PC-3 (cell line): ENCODE measurements at regions of chr16 and their contacts with region 1.

Region 1: GRCh38 chr16:11396241-11397048 is 51.2 kb downstream of the RMI2 start:
- DNase-seq: peak; percentile 76
- ATAC-seq: peak; percentile 82
- H3K4me3 ChIP-seq: no peak overlapping the region
- H3K27ac ChIP-seq: no peak overlapping the region
- H3K4me1 ChIP-seq: no peaks in the 10 kb centered on the region; the same call in 1 of the 2 replicates
- H3K27me3 ChIP-seq: no peaks in the 10 kb centered on the region
- CTCF ChIP-seq: peak; percentile 85

Region 2: DNA sequence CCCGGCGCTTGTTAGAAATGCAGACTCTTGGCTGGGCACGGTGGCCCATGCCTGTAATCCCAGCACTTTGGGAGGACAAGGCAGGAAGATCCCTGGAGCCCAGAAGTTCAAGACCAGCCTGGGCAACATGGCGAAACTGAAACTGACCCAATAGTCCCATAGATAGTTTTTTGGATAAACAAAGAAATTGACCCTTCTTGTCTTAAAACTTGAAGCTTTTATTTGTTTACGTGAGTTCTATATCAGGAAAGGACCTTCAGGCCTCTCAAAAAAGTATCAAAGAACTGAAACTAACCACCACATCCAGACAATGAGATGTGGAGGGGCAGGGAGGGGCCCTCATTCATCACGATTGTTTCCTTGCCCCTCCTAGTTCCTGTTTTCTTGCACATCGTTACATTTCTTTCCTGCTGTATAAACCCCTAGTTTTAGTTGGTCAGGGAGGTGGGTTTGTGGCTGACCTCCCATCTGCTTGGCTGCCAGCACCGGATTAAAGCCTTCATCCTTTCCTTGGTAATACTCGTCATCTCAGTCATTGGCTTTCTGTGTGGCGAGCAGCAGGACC is 85.4 kb before region 1 on chr16:
- CTCF ChIA-PET with region 1: no interaction called
- POLR2A ChIA-PET with region 1: no interaction called
- intact Hi-C with region 1: no loop called
- DNase-seq: no peak
- ATAC-seq: no peak
- H3K4me3 ChIP-seq: no peak overlapping the region
- H3K27ac ChIP-seq: no peak overlapping the region
- H3K4me1 ChIP-seq: peaks cover 8% of the 10 kb centered on the region; the same call in 1 of the 2 replicates
- H3K27me3 ChIP-seq: no peaks in the 10 kb centered on the region
- CTCF ChIP-seq: no peak

Region 3: DNA sequence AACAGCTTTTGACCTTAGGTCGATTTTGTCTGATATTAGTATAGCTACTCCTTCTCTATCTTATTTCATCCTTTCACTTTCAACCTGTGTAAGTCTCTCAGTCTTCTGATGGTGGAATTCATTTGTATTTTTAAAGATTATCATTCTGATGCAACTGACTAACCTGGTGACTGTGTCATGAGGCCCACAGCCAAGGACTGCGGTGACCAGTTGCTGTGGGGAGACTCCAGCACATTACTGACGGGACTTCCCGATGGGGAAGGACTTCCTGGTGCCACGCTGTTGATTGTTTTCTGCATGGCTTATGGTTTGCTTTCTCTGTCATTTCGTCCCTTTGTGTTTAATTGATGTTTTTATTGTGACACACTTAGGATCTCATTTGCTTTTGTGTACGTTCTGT is 17.0 kb before region 1 on chr16:
- CTCF ChIA-PET with region 1: no interaction called
- POLR2A ChIA-PET with region 1: interaction called, 14 read pairs
- intact Hi-C with region 1: no loop called
- DNase-seq: peak; percentile 57
- ATAC-seq: peak; percentile 81
- H3K4me3 ChIP-seq: no peak overlapping the region
- H3K27ac ChIP-seq: peak overlapping the region; percentile 27
- H3K4me1 ChIP-seq: peaks cover 9% of the 10 kb centered on the region
- H3K27me3 ChIP-seq: no peaks in the 10 kb centered on the region
- CTCF ChIP-seq: no peak

Region 4: DNA sequence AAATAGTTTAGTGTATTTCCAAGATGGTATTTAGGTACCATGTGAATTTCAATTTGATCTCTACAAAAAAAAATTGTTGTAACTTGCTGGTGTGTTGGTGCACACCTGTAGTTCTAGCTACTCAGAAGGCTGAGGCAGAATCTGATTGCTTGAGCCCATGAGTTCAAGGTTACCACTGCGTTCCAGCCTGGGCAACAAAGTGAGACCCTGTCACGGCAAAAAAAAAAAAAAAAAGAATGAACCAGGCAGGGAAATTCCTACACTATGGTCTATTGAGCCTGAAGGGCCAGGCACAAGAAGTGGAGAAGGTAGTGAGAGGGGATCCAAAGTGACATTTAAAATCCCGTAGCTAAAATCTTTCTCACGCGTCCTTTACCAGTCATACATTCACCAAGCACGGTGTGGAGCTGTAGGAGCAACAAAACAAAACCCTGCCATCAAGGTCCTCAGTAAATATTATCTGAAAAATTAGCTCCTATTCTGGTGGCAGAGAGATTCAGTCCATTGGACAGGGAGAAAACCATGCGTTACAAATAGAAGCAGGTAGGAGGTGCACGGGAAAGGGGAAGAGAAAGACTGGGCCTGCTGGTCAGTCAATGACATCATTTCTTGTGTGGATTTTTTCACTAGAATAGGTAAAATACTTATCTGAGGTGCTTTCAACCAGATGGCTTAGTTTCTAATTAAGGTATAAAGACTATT is 319.0 kb after region 1 on chr16:
- CTCF ChIA-PET with region 1: no interaction called
- POLR2A ChIA-PET with region 1: no interaction called
- intact Hi-C with region 1: loop called (anchors 1 kb)
- DNase-seq: no peak
- ATAC-seq: no peak; the same call in 1 of the 2 replicates
- H3K4me3 ChIP-seq: no peak overlapping the region
- H3K27ac ChIP-seq: no peak overlapping the region
- H3K4me1 ChIP-seq: no peaks in the 10 kb centered on the region
- H3K27me3 ChIP-seq: no peaks in the 10 kb centered on the region
- CTCF ChIP-seq: no peak